Activated naive CD4-positive, alpha-beta T cell treated with anti-CD3 and anti-CD28 coated beads for 36 hours (primary cell): ENCODE measurements at regions of chr1 and their contacts with region 1.

Region 1: DNA sequence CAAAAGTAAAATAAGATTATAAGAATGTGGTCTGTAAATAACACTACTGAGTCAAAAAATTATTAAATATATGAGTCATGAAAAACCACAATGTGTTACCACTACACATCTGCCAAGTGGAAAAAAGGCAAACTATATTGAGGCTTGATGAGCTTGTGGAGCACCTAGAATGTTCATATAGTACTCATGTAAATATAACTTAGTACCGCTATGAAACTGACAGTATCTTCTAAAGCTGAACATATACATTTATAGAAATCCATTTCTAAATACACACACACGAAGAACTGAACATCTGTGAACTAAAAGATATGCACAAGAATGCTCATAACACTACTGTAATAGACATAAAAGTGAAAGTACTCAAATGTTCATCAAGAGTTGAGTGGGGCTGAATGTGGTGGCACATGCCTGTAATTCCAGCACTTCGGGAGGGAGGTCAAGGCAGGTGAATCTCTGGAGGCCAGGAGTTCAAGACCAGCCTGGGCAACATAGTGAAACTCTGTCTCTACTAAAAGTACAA is 18.5 kb upstream of the GBP3 start:
- DNase-seq: peak; percentile 63
- H3K4me3 Mint-ChIP-seq: peak overlapping the region; percentile 25
- H3K27ac Mint-ChIP-seq: peak overlapping the region; percentile 72
- H3K4me1 Mint-ChIP-seq: peaks cover 33% of the 10 kb centered on the region
- H3K27me3 Mint-ChIP-seq: peaks cover 11% of the 10 kb centered on the region

Region 2: DNA sequence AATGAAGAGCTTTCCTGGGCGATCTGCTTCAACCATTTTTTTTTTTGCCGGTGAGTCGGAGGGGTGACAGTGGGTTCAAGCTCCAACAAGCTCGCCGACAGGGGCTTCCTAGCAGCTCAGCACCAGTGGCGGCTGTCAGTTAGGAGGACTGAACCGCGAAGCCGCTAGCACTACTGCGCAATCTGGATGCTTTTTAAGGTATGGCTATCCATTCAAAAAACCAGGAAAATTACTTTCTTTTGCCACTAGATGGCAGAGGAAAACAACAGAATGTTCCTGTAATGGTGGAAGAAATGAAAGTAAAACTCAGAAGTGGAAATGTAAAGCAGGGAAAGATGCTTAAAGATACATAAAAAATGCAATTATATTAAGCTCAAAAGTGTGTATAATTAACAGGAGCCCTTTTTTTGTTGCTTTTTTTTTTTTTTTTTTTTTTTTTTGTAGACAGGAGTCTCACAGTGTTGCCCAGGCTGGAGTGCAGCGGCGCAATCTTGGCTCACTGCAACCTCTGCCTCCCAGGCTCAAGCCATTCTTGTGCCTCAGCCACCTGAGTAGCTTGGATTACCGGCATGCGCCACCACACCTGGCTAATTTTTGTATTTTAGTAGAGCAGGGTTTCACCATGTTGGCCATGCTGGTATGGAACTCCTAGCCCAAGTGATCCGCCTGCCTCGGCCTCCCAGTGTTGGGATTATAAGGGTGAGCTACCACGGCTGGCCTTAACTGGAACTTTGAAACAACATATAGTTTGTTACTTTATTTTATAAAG is 57.2 kb before region 1 on chr1:
- CTCF ChIA-PET with region 1: interaction called, 3 read pairs
- intact Hi-C with region 1: loop called (anchors 2 kb)
- DNase-seq: peak; percentile 42
- H3K4me3 Mint-ChIP-seq: peak overlapping the region; percentile 27
- H3K27ac Mint-ChIP-seq: peak overlapping the region; percentile 47
- H3K4me1 Mint-ChIP-seq: peaks cover 80% of the 10 kb centered on the region
- H3K27me3 Mint-ChIP-seq: no peaks in the 10 kb centered on the region

Region 3: DNA sequence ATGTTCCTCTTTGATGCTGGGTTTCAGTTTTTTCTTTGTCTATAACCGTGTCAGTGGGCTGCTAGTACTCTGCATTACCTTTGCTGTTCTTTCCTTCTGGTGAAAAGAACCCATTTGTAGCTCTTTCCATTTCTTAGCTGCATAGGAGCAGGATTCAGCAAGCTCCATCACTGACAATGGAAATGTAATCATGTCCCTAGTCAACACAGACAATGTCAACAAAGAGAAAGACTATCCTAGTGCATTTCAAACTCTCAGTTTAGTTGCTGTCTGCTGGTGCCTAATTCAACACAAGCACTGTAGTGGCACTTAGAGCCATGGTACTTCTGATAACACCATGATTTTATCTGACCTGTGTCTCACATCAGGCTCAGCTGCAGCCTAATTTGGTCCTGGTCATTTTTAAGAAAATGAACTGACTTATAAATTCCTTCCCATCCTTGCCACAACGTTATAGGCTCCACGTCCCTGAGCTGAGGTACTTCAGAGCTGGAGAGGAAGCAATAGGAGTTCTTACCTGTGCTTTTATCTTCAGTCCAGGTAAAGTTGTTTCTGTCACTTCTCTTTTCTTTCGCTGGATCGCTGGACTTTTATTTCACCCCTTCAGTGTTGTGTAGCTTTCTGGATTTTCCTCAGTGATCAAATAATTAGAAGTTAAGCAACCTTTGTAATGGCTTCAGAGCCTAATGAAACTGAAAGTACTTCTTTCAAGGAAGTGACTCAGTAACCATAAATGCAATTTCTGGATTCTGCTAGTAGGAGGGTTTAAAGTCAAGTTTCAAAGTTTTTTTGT is 18.8 kb before region 1 on chr1 and contains the start of gene GBP3:
- CTCF ChIA-PET with region 1: interaction called, 9 read pairs
- intact Hi-C with region 1: loop called (anchors 1 kb)
- DNase-seq: no peak
- H3K4me3 Mint-ChIP-seq: peak within 1 kb of the TSS; percentile 73
- H3K27ac Mint-ChIP-seq: peak within 1 kb of the TSS; percentile 72
- H3K4me1 Mint-ChIP-seq: peaks cover 51% of the 10 kb centered on the region
- H3K27me3 Mint-ChIP-seq: no peaks in the 10 kb centered on the region
- total RNA-seq, gene GBP3: 1.4 to 1.8 TPM

Region 4: GRCh38 chr1:89104147-89104546 is 63.0 kb after region 1 on chr1:
- CTCF ChIA-PET with region 1: no interaction called
- intact Hi-C with region 1: loop called (anchors 2 kb)
- DNase-seq: no peak
- H3K4me3 Mint-ChIP-seq: no peak overlapping the region
- H3K27ac Mint-ChIP-seq: peak overlapping the region; percentile 88
- H3K4me1 Mint-ChIP-seq: peaks cover 41% of the 10 kb centered on the region
- H3K27me3 Mint-ChIP-seq: no peaks in the 10 kb centered on the region

Region 5: GRCh38 chr1:89190017-89190416 is 148.8 kb after region 1 on chr1:
- CTCF ChIA-PET with region 1: no interaction called
- intact Hi-C with region 1: no loop called
- DNase-seq: no peak
- H3K4me3 Mint-ChIP-seq: no peak overlapping the region
- H3K27ac Mint-ChIP-seq: no peak overlapping the region
- H3K4me1 Mint-ChIP-seq: peaks cover 43% of the 10 kb centered on the region
- H3K27me3 Mint-ChIP-seq: no peaks in the 10 kb centered on the region

Region 6: GRCh38 chr1:89605692-89606091 is 564.5 kb after region 1 on chr1:
- CTCF ChIA-PET with region 1: no interaction called
- intact Hi-C with region 1: loop called (anchors 2 kb)
- DNase-seq: no peak
- H3K4me3 Mint-ChIP-seq: no peak overlapping the region
- H3K27ac Mint-ChIP-seq: no peak overlapping the region
- H3K4me1 Mint-ChIP-seq: peaks cover 95% of the 10 kb centered on the region
- H3K27me3 Mint-ChIP-seq: no peaks in the 10 kb centered on the region